Heart left ventricle (tissue), 16 donors: ENCODE measurements at regions of chr7 and their contacts with region 1.

Region 1: GRCh38 chr7:36021367-36021766 is 131.7 kb upstream of the EEPD1 start:
- DNase-seq: no peak
- ATAC-seq: peak in 3 of 4 donors; percentile 18 to 48 (median 43)
- H3K4me3 ChIP-seq: no peak overlapping the region
- H3K27ac ChIP-seq: no peak overlapping the region
- H3K4me1 ChIP-seq: peaks cover 0 to 10% (median 0%) of the 10 kb centered on the region in 12 donors
- H3K27me3 ChIP-seq: no peaks in the 10 kb centered on the region
- CTCF ChIP-seq: peak in 10 of 12 donors; percentile 7 to 54 (median 35)
- POLR2A ChIP-seq: no peak

Region 2: GRCh38 chr7:36096460-36097095 is 75.2 kb after region 1 on chr7:
- intact Hi-C with region 1: loop called in 1 of 10 experiments (anchors 5 kb)
- DNase-seq: no peak
- ATAC-seq: peak in 2 of 4 donors; percentile 59 to 85
- H3K4me3 ChIP-seq: no peak overlapping the region
- H3K27ac ChIP-seq: no peak overlapping the region
- H3K4me1 ChIP-seq: peaks cover 0 to 18% (median 5%) of the 10 kb centered on the region in 12 donors
- H3K27me3 ChIP-seq: no peaks in the 10 kb centered on the region
- CTCF ChIP-seq: peak in 7 of 12 donors; percentile 17 to 44 (median 31)
- POLR2A ChIP-seq: no peak

Region 3: GRCh38 chr7:36366718-36367560 is 345.6 kb after region 1 on chr7:
- intact Hi-C with region 1: no loop called
- DNase-seq: peak; percentile 85 to 94 (median 88)
- ATAC-seq: peak; percentile 94 to 100 (median 99)
- H3K4me3 ChIP-seq: peak overlapping the region; percentile 48 to 86 (median 78)
- H3K27ac ChIP-seq: peak overlapping the region in 4 of 12 donors; percentile 35 to 81 (median 42)
- H3K4me1 ChIP-seq: peaks cover 0 to 14% (median 2%) of the 10 kb centered on the region in 12 donors
- H3K27me3 ChIP-seq: peaks cover 0 to 8% (median 0%) of the 10 kb centered on the region in 9 donors
- CTCF ChIP-seq: peak; percentile 79 to 99 (median 93)
- POLR2A ChIP-seq: peak in 1 of 2 donors; percentile 54

Region 4: GRCh38 chr7:36605261-36606051 is 584.1 kb after region 1 on chr7:
- intact Hi-C with region 1: no loop called
- DNase-seq: no peak
- ATAC-seq: no peak
- H3K4me3 ChIP-seq: no peak overlapping the region
- H3K27ac ChIP-seq: no peak overlapping the region
- H3K4me1 ChIP-seq: no peaks in the 10 kb centered on the region
- H3K27me3 ChIP-seq: peaks cover 0 to 8% (median 0%) of the 10 kb centered on the region in 9 donors
- CTCF ChIP-seq: no peak
- POLR2A ChIP-seq: no peak